ENCODE measurements at regions of chr19 and their contacts with region 1.

Region 1: GRCh38 chr19:14136509-14137281 is at the start of gene ASF1B:
- DNase-seq: peak; percentile 98
- H3K4me3 Mint-ChIP-seq: peak within 1 kb of the TSS; percentile 83
- H3K27ac Mint-ChIP-seq: peak within 1 kb of the TSS; percentile 92
- H3K4me1 Mint-ChIP-seq: peaks cover 31% of the 10 kb centered on the region
- H3K27me3 Mint-ChIP-seq: no peaks in the 10 kb centered on the region
- total RNA-seq, gene ASF1B: 76.3 and 77.4 TPM in 2 replicates

Region 2: GRCh38 chr19:13505761-13506470 is 630.8 kb before region 1 on chr19:
- intact Hi-C with region 1: no loop called
- DNase-seq: no peak
- H3K4me3 Mint-ChIP-seq: no peak overlapping the region
- H3K27ac Mint-ChIP-seq: no peak overlapping the region
- H3K4me1 Mint-ChIP-seq: no peaks in the 10 kb centered on the region
- H3K27me3 Mint-ChIP-seq: peaks cover 47% of the 10 kb centered on the region

Region 3: DNA sequence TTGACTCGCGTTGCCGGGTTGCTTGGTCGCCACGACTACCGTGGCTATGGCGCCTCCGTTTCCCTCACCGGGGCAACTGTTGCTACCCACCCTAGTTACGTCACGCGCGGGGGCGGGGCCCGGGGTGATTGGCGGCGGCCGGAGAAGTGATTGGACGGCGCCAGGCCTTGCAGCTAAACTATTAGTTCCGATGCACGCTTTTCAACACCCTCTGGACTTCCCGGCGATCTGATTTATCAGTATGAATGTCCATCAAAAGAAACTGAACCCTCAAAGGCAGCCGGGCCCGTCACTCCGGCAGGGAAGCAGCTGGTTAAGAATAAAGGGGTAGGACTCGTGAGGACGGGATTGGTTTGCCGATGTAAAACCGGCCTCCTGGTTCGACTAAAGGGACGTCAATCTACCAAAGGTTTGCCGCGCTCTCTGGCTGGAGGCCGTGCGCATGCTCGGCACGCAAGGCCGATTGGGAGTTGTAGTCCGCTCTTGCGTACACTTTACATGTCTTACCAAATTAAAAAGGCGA is 130.4 kb before region 1 on chr19 and contains the start of gene RFX1:
- intact Hi-C with region 1: loop called (anchors 1 kb)
- DNase-seq: peak; percentile 99
- H3K4me3 Mint-ChIP-seq: peak within 1 kb of the TSS; percentile 87
- H3K27ac Mint-ChIP-seq: peak within 1 kb of the TSS; percentile 99
- H3K4me1 Mint-ChIP-seq: peaks cover 35% of the 10 kb centered on the region
- H3K27me3 Mint-ChIP-seq: peaks cover 2% of the 10 kb centered on the region
- total RNA-seq, gene RFX1: 16.0 and 17.0 TPM in 2 replicates

Region 4: GRCh38 chr19:14091081-14091812 is 45.4 kb before region 1 on chr19:
- intact Hi-C with region 1: loop called (anchors 1 kb)
- DNase-seq: peak; percentile 74
- H3K4me3 Mint-ChIP-seq: peak overlapping the region; percentile 99
- H3K27ac Mint-ChIP-seq: peak overlapping the region; percentile 100
- H3K4me1 Mint-ChIP-seq: peaks cover 16% of the 10 kb centered on the region
- H3K27me3 Mint-ChIP-seq: no peaks in the 10 kb centered on the region

Region 5: GRCh38 chr19:14198384-14199376 is 62.0 kb after region 1 on chr19:
- intact Hi-C with region 1: loop called (anchors 2 kb)
- DNase-seq: no peak
- H3K4me3 Mint-ChIP-seq: no peak overlapping the region
- H3K27ac Mint-ChIP-seq: no peak overlapping the region
- H3K4me1 Mint-ChIP-seq: peaks cover 31% of the 10 kb centered on the region
- H3K27me3 Mint-ChIP-seq: peaks cover 12% of the 10 kb centered on the region

Region 6: GRCh38 chr19:14405758-14406644 is 269.3 kb after region 1 on chr19:
- intact Hi-C with region 1: loop called (anchors 1 kb)
- DNase-seq: peak; percentile 85
- H3K4me3 Mint-ChIP-seq: no peak overlapping the region
- H3K27ac Mint-ChIP-seq: peak overlapping the region; percentile 65
- H3K4me1 Mint-ChIP-seq: no peaks in the 10 kb centered on the region
- H3K27me3 Mint-ChIP-seq: no peaks in the 10 kb centered on the region

Region 7: DNA sequence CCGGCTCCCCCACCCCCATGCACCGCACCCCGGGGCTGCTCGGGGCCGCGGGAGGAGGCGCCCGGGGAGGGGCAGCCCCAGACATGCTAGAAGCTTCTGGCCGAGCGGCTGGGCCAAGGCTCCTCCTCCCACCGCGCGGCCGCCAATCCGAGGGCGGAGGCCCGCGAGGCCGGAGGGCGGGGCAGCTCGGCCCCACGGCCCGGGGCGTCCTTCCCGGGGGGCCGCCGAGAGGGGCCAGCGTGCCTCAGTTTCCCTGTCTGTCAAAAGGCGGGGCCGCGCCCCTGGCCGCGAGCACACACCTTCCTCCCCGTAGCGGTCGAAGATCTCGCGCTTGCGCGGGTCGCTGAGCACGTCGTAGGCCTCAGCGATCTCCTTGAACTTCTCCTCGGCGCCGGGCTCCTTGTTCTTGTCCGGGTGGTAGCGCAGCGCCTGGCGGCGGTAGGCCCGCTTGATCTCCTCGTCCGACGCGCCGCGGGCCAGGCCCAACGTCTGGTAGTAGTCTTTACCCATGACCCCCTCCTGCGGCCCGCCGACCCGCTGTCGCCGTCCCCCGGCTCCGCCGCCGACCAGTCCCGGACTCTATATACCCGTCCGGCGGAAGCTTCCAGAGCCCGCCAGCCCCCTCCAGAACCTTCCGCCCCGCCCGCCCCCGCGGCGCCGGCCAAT is 381.3 kb after region 1 on chr19 and contains the start of gene DNAJB1:
- intact Hi-C with region 1: loop called (anchors 1 kb)
- DNase-seq: peak; percentile 73
- H3K4me3 Mint-ChIP-seq: peak within 1 kb of the TSS; percentile 91
- H3K27ac Mint-ChIP-seq: peak within 1 kb of the TSS; percentile 94
- H3K4me1 Mint-ChIP-seq: peaks cover 60% of the 10 kb centered on the region
- H3K27me3 Mint-ChIP-seq: peaks cover 2% of the 10 kb centered on the region
- total RNA-seq, gene DNAJB1: 104 and 120 TPM in 2 replicates